ENCODE measurements at regions of chr2 and their contacts with region 1.

Region 1: DNA sequence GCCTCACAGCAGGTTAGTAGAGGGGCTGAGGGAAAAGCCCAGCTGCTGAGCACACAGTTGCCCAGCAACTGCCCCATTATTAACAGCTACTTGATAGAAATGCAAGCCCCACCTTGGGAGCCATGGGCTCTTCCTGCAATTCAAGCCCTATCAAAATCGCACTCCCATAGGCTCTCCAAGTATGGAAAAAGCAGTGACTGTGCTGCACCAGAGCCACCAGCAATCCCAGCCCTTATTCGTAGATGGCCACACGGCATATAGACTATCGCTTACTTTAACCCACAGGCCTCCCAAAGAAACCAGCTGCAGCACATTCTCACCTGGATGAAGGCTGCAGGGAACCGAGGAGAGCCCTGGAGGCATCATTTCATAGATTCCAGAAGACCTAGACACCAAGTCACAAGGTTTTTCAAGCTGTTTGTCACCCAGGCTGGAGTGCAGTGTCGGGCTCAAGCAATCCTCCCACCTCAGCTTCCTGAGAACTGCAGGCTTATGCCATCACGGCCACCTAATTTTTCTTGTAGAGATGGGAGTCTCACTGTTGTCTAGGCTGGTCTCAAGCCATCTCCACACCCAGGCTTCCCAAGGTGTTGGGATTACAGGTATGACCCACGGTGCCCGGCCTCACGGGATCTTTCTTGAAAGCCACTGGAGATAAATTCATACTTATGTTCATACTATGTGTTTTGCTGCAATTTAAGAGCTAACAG is 11.3 kb downstream of the NCL start:
- DNase-seq: no peak
- H3K4me3 ChIP-seq: no peak overlapping the region
- H3K27ac ChIP-seq: peak overlapping the region; percentile 21
- H3K27me3 ChIP-seq: no peaks in the 10 kb centered on the region
- CTCF ChIP-seq: no peak

Region 2: GRCh38 chr2:231104115-231104713 is 348.7 kb before region 1 on chr2:
- CTCF ChIA-PET with region 1: interaction called, 51 read pairs
- POLR2A ChIA-PET with region 1: interaction called, 7 read pairs
- DNase-seq: peak; percentile 44
- H3K4me3 ChIP-seq: no peak overlapping the region
- H3K27ac ChIP-seq: no peak overlapping the region
- H3K27me3 ChIP-seq: no peaks in the 10 kb centered on the region
- CTCF ChIP-seq: peak; percentile 94

Region 3: DNA sequence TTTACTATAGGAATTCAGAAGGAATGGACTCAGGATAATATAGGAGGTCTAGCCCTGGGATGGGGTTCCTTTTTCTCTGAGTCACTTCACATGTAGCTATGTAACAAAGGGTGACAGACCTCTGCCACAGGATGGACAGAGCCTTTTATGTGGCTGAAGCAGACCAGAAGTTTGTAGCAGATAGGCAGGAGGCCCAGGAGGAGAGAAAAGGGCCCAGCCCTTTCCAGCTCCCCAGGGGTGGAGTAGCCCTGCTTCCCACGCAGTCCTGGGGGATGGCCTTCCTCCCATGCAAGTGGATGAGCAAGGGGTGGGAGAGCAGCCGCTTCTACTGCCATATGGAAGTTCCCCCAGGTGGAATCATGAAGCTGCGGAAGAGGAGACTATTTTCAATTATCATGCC is 214.3 kb before region 1 on chr2:
- CTCF ChIA-PET with region 1: interaction called, 16 read pairs
- POLR2A ChIA-PET with region 1: interaction called, 5 read pairs
- DNase-seq: no peak
- H3K4me3 ChIP-seq: no peak overlapping the region
- H3K27ac ChIP-seq: no peak overlapping the region
- H3K27me3 ChIP-seq: no peaks in the 10 kb centered on the region
- CTCF ChIP-seq: no peak

Region 4: GRCh38 chr2:231337807-231338759 is 114.9 kb before region 1 on chr2:
- CTCF ChIA-PET with region 1: interaction called, 15 read pairs
- POLR2A ChIA-PET with region 1: no interaction called
- DNase-seq: no peak
- H3K4me3 ChIP-seq: no peak overlapping the region
- H3K27ac ChIP-seq: no peak overlapping the region
- H3K27me3 ChIP-seq: no peaks in the 10 kb centered on the region
- CTCF ChIP-seq: no peak

Region 5: GRCh38 chr2:231436957-231437356 is 16.0 kb before region 1 on chr2:
- CTCF ChIA-PET with region 1: interaction called, 13 read pairs
- POLR2A ChIA-PET with region 1: interaction called, 15 read pairs
- DNase-seq: no peak
- H3K4me3 ChIP-seq: no peak overlapping the region
- H3K27ac ChIP-seq: no peak overlapping the region
- H3K27me3 ChIP-seq: no peaks in the 10 kb centered on the region
- CTCF ChIP-seq: no peak